ENCODE measurements at regions of chr13 and their contacts with region 1.

Region 1: GRCh38 chr13:106536244-106537034 is 977 bp upstream of the EFNB2 start:
- DNase-seq: peak; percentile 88 to 93
- H3K4me3 ChIP-seq: peak overlapping the region; percentile 93
- H3K4me3 Mint-ChIP-seq: peak overlapping the region; percentile 97
- H3K27ac Mint-ChIP-seq: peak overlapping the region; percentile 94
- H3K4me1 ChIP-seq: peaks cover 7% of the 10 kb centered on the region
- H3K4me1 Mint-ChIP-seq: peaks cover 7% of the 10 kb centered on the region
- H3K27me3 ChIP-seq: no peaks in the 10 kb centered on the region
- H3K27me3 Mint-ChIP-seq: no peaks in the 10 kb centered on the region
- CTCF ChIP-seq: peak; percentile 93 to 98

Region 2: DNA sequence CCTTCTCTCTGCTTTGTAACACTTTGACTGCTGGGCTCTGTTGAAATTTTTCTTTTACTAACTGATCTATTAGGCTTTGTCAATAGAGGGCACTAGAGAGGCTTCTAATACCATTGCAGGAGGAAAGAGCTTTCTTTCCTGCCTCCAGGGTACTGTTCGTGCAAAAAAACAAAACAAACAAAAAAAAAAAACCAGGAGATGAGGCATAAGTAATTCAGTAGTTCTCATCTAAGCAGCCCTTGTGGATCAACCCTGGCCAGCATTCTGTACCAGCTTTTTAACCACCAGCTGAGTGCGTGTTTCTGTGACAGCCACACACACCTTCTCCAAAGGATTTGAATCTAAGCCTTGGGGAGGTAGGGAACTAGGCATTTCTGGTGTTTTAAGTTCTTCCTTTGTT is 1762.7 kb before region 1 on chr13:
- CTCF ChIA-PET with region 1: interaction called, 4 read pairs
- POLR2A ChIA-PET with region 1: no interaction called
- intact Hi-C with region 1: loop called (anchors 2 kb)
- DNase-seq: peak in 1 of 2 experiments; percentile 23
- H3K4me3 ChIP-seq: no peak overlapping the region
- H3K4me3 Mint-ChIP-seq: no peak overlapping the region
- H3K27ac Mint-ChIP-seq: no peak overlapping the region
- H3K4me1 ChIP-seq: no peaks in the 10 kb centered on the region
- H3K4me1 Mint-ChIP-seq: no peaks in the 10 kb centered on the region
- H3K27me3 ChIP-seq: no peaks in the 10 kb centered on the region
- H3K27me3 Mint-ChIP-seq: no peaks in the 10 kb centered on the region
- CTCF ChIP-seq: peak; percentile 51 to 62

Region 3: GRCh38 chr13:105513448-105513847 is 1023.0 kb before region 1 on chr13:
- CTCF ChIA-PET with region 1: no interaction called
- POLR2A ChIA-PET with region 1: no interaction called
- intact Hi-C with region 1: loop called (anchors 2 kb)
- DNase-seq: no peak
- H3K4me3 ChIP-seq: no peak overlapping the region
- H3K4me3 Mint-ChIP-seq: no peak overlapping the region
- H3K27ac Mint-ChIP-seq: no peak overlapping the region
- H3K4me1 ChIP-seq: no peaks in the 10 kb centered on the region
- H3K4me1 Mint-ChIP-seq: no peaks in the 10 kb centered on the region
- H3K27me3 ChIP-seq: no peaks in the 10 kb centered on the region
- H3K27me3 Mint-ChIP-seq: peaks cover 9% of the 10 kb centered on the region
- CTCF ChIP-seq: no peak

Region 4: DNA sequence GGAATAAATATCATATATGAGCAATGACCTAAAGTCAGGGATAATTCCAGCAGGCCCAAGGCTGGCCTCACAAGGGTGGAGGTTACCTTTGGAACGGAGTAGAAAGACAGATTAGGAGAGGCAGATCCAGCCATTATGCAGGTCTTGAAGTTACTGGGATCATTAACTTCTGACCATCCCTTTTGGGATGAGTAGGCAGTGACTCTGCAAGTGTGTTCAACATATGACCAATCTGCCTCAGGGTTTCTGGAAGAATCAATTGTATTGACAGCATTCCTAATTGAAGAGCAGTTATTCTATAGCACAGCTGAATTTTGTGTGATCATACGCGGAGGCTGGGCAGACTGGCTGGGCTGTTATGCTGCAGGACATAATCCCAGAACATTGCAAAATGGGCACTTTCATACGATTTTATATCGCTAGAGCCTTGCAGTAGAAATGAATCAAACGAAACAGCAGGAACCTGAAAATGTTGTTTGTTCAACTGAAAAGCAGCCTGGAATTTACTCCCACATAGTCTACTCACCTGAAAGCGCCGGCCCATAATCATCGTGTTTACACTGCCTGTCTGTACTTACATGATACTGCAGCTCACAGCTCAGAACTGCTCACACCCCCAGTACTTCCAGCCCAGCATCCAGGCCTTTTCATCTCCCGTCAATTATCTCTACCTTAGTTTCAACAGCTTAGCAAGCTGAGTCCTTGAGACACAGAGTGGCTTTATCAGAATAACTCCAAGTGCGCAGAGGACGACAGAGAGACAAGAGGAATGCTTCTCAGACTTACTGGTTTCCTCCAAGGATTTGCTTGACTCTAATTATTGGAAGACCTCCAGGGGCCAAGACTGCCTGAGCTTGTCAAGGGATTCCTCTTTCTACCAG is 557.1 kb before region 1 on chr13:
- CTCF ChIA-PET with region 1: no interaction called
- POLR2A ChIA-PET with region 1: no interaction called
- intact Hi-C with region 1: loop called (anchors 2 kb)
- DNase-seq: peak; percentile 87 to 95
- H3K4me3 ChIP-seq: peak overlapping the region; percentile 9
- H3K4me3 Mint-ChIP-seq: peak overlapping the region; percentile 57
- H3K27ac Mint-ChIP-seq: peak overlapping the region; percentile 82
- H3K4me1 ChIP-seq: peaks cover 40% of the 10 kb centered on the region
- H3K4me1 Mint-ChIP-seq: peaks cover 38% of the 10 kb centered on the region
- H3K27me3 ChIP-seq: no peaks in the 10 kb centered on the region
- H3K27me3 Mint-ChIP-seq: no peaks in the 10 kb centered on the region
- CTCF ChIP-seq: no peak

Region 5: GRCh38 chr13:106619688-106620555 is 83.5 kb after region 1 on chr13:
- CTCF ChIA-PET with region 1: interaction called, 9 read pairs
- POLR2A ChIA-PET with region 1: no interaction called
- intact Hi-C with region 1: loop called (anchors 2 kb)
- DNase-seq: peak in 1 of 2 experiments; percentile 53
- H3K4me3 ChIP-seq: 0 out of 2 replicates have a peak overlapping the region, but pooled peaks have one; percentile 2
- H3K4me3 Mint-ChIP-seq: peak overlapping the region; percentile 6
- H3K27ac Mint-ChIP-seq: no peak overlapping the region
- H3K4me1 ChIP-seq: peaks cover 8% of the 10 kb centered on the region; the same call in 1 of the 2 replicates
- H3K4me1 Mint-ChIP-seq: no peaks in the 10 kb centered on the region
- H3K27me3 ChIP-seq: no peaks in the 10 kb centered on the region
- H3K27me3 Mint-ChIP-seq: no peaks in the 10 kb centered on the region
- CTCF ChIP-seq: peak; percentile 80 to 90

Measured in Caco-2 (cell line).